GM12878 (cell line): ENCODE measurements at regions of chr1 and their contacts with region 1.

Region 1: GRCh38 chr1:11784993-11785769 is 20.6 kb downstream of the MTHFR start:
- DNase-seq: no peak
- ATAC-seq: peak; percentile 94
- H3K4me3 ChIP-seq: no peak overlapping the region
- H3K27ac ChIP-seq: no peak overlapping the region
- H3K4me1 ChIP-seq: peaks cover 4% of the 10 kb centered on the region; the same call in 1 of the 2 replicates
- H3K27me3 ChIP-seq: no peaks in the 10 kb centered on the region
- CTCF ChIP-seq: peak; percentile 79 to 96 (median 81)
- EP300 ChIP-seq: no peak
- POLR2A ChIP-seq: no peak
- RAD21 ChIP-seq: peak; percentile 43

Region 2: DNA sequence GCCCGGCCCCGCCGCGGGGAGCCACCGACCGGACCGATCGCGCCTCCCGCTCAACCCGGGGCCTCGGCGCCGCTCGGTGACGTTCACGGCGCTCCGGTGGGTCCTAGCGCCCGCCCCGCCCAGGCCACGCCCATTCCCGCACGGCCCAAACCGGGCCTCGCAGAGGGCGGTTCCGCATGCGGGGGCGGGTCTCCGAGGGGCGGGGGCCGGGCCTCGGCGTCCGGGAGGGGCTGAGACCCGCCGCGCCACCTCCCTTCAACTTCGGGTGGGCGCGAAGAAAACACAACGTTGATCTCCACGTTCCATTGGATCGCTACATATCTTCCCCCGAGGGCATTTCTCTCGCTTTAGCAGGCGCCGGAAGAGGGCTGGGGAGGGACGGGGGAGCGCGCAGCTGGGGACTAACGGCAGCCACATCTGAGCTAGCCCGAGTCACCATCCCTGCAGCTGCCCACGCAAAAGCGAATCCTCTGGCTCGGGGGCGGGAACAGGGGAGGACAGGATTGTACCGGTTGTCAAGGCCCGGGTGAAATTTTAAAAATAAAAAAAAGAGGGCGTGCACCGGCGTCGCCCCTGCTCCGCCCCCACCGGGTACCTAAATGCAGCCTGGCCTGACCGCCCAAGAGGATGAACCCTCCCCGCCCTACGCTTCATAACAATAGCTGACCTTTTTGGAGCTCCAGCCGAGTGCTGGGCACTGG is 104.0 kb before region 1 on chr1 and contains the start of gene MAD2L2:
- CTCF ChIA-PET with region 1: no interaction called
- POLR2A ChIA-PET with region 1: no interaction called
- RAD21 ChIA-PET with region 1: no interaction called
- SMC1A ChIA-PET with region 1: no interaction called
- in situ Hi-C with region 1: no loop called
- intact Hi-C with region 1: no loop called
- DNase-seq: peak; percentile 28
- ATAC-seq: peak; percentile 97
- H3K4me3 ChIP-seq: peak within 1 kb of the TSS; percentile 93
- H3K27ac ChIP-seq: peak within 1 kb of the TSS; percentile 70
- H3K4me1 ChIP-seq: no peaks in the 10 kb centered on the region
- H3K27me3 ChIP-seq: no peaks in the 10 kb centered on the region
- CTCF ChIP-seq: no peak
- EP300 ChIP-seq: no peak
- POLR2A ChIP-seq: peak; percentile 88
- RAD21 ChIP-seq: no peak
- polyA plus RNA-seq, gene MAD2L2: 3.5 to 8.0 TPM

Region 3: GRCh38 chr1:11797525-11798216 is 12.5 kb after region 1 on chr1:
- CTCF ChIA-PET with region 1: interaction called, 24 read pairs
- POLR2A ChIA-PET with region 1: interaction called, 4 read pairs
- RAD21 ChIA-PET with region 1: no interaction called
- SMC1A ChIA-PET with region 1: interaction called, 3 read pairs
- in situ Hi-C with region 1: no loop called
- intact Hi-C with region 1: no loop called
- DNase-seq: no peak
- ATAC-seq: no peak
- H3K4me3 ChIP-seq: no peak overlapping the region
- H3K27ac ChIP-seq: no peak overlapping the region
- H3K4me1 ChIP-seq: no peaks in the 10 kb centered on the region; the same call in 1 of the 2 replicates
- H3K27me3 ChIP-seq: no peaks in the 10 kb centered on the region
- CTCF ChIP-seq: no peak
- EP300 ChIP-seq: no peak
- POLR2A ChIP-seq: no peak
- RAD21 ChIP-seq: no peak